Sigmoid colon (tissue), 7 donors: ENCODE measurements at regions of chr12 and their contacts with region 1.

Region 1: GRCh38 chr12:52032804-52033502 is 18.3 kb upstream of the NR4A1 start:
- DNase-seq: peak; percentile 100
- H3K4me3 ChIP-seq: peak overlapping the region; percentile 8 to 46 (median 41)
- H3K27ac ChIP-seq: peak overlapping the region; percentile 90 to 96 (median 92)
- H3K4me1 ChIP-seq: peaks cover 0 to 47% (median 38%) of the 10 kb centered on the region in 4 donors
- H3K27me3 ChIP-seq: no peaks in the 10 kb centered on the region
- CTCF ChIP-seq: no peak
- EP300 ChIP-seq: peak in 3 of 4 donors; percentile 28 to 97 (median 71)
- POLR2A ChIP-seq: peak; percentile 72 to 74

Region 2: GRCh38 chr12:52050761-52051541 is 18.0 kb after region 1 on chr12 and contains the start of gene NR4A1:
- intact Hi-C with region 1: loop called (anchors 2 kb)
- DNase-seq: peak; percentile 100
- H3K4me3 ChIP-seq: peak within 1 kb of the TSS; percentile 67 to 77 (median 68)
- H3K27ac ChIP-seq: peak within 1 kb of the TSS; percentile 94 to 100 (median 96)
- H3K4me1 ChIP-seq: peaks cover 0 to 66% (median 57%) of the 10 kb centered on the region in 4 donors
- H3K27me3 ChIP-seq: no peaks in the 10 kb centered on the region
- CTCF ChIP-seq: no peak
- EP300 ChIP-seq: peak; percentile 95 to 100 (median 98)
- POLR2A ChIP-seq: peak; percentile 98
- total RNA-seq, gene NR4A1: 41.7 to 276 (median 167) TPM

Region 3: GRCh38 chr12:52069327-52070184 is 36.6 kb after region 1 on chr12 and contains the start of gene ATG101:
- intact Hi-C with region 1: loop called (anchors 2 kb)
- DNase-seq: peak; percentile 96
- H3K4me3 ChIP-seq: peak within 1 kb of the TSS; percentile 80 to 97 (median 88)
- H3K27ac ChIP-seq: peak within 1 kb of the TSS; percentile 87 to 92 (median 89)
- H3K4me1 ChIP-seq: peaks cover 0 to 35% (median 18%) of the 10 kb centered on the region in 4 donors
- H3K27me3 ChIP-seq: no peaks in the 10 kb centered on the region
- CTCF ChIP-seq: peak; percentile 31 to 55 (median 42)
- EP300 ChIP-seq: peak in 1 of 4 donors; percentile 46
- POLR2A ChIP-seq: peak; percentile 71 to 77
- total RNA-seq, gene ATG101: 30.2 to 48.7 (median 38.2) TPM

Region 4: DNA sequence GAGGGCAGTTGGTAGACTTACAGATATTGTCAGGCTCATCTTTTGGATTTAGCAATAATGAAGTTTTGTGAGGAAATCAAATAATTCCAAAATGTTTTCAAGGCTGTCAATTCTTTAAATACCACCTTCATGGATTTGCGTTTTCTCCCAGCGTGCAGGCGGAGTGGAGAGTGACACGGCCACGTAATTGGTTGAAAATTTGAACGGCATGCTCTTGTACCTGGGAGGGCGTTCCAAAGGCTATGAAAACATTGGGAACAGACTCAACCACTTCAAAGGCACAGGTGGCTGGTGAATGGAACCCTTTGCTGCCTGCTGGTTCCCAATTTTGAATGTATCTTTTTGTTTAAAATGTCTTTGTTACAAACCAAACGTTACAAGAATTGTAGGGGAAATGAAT is 58.9 kb after region 1 on chr12:
- intact Hi-C with region 1: no loop called
- DNase-seq: no peak
- H3K4me3 ChIP-seq: no peak overlapping the region
- H3K27ac ChIP-seq: no peak overlapping the region
- H3K4me1 ChIP-seq: no peaks in the 10 kb centered on the region
- H3K27me3 ChIP-seq: peaks cover 0 to 48% (median 0%) of the 10 kb centered on the region in 3 donors
- CTCF ChIP-seq: no peak
- EP300 ChIP-seq: no peak
- POLR2A ChIP-seq: no peak

Region 5: GRCh38 chr12:52121824-52122539 is 89.0 kb after region 1 on chr12:
- intact Hi-C with region 1: no loop called
- DNase-seq: peak; percentile 85
- H3K4me3 ChIP-seq: no peak overlapping the region
- H3K27ac ChIP-seq: no peak overlapping the region
- H3K4me1 ChIP-seq: peaks cover 0 to 7% (median 3%) of the 10 kb centered on the region in 4 donors
- H3K27me3 ChIP-seq: peaks cover 0 to 25% (median 7%) of the 10 kb centered on the region in 3 donors
- CTCF ChIP-seq: peak in 2 of 4 experiments; percentile 24 to 74
- EP300 ChIP-seq: no peak
- POLR2A ChIP-seq: no peak

Region 6: GRCh38 chr12:52493172-52493571 is 460.2 kb after region 1 on chr12 and contains the start of gene KRT6A:
- intact Hi-C with region 1: no loop called
- DNase-seq: no peak
- H3K4me3 ChIP-seq: no peak within 1 kb of the TSS
- H3K27ac ChIP-seq: no peak within 1 kb of the TSS
- H3K4me1 ChIP-seq: peaks cover 0 to 35% (median 17%) of the 10 kb centered on the region in 4 donors
- H3K27me3 ChIP-seq: no peaks in the 10 kb centered on the region
- CTCF ChIP-seq: no peak
- EP300 ChIP-seq: no peak
- POLR2A ChIP-seq: no peak
- total RNA-seq, gene KRT6A: not detected